Calu3 (cell line): ENCODE measurements at regions of chr15 and their contacts with region 1.

Region 1: DNA sequence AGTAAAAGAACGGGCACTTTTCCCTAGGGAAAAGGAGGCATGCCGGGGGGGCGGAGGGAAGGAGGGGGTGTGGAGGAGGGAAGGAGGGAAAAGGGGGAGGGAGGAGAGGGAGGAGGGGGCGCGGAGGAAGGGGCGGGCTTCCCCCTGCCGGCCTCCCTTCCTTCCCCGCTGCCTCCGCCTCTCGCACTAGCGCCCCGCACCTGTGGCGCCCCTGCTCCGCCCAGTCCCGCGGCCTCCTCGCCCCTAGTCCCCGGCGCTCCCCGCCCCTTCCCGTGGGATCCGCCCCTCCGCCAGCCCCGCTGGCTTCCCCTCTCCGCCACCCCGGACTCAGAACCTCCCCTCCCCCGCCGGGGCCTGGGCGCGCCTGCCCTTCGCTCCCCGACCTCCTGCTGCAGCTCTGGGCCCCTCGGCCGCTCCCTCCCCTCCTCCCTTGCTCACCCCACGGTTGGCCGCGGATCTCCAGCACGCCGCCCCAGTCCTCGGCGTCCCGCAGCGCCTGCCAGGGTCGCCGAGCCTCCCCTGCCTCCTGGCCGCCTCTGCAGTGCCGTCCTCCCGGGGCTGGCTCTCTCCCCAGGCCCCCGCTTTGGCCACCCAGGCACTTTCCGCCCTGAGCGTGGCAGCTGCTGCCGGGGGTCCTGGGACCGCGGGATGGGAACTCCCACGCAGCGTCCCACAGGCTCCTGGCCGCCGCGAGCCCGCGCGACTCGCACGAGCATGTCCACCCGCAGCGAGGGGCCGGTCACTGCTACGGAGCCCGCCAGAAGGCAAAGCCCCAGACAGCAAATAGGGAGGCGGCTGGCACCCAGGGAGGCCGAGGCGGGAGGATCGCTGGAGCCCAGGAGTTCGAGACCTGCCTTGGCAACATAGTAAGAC is 147.4 kb downstream of the TJP1 start:
- DNase-seq: peak; percentile 76
- H3K4me3 Mint-ChIP-seq: peak overlapping the region; percentile 66
- H3K27ac Mint-ChIP-seq: no peak overlapping the region
- H3K4me1 Mint-ChIP-seq: peaks cover 9% of the 10 kb centered on the region
- H3K27me3 Mint-ChIP-seq: no peaks in the 10 kb centered on the region
- CTCF ChIP-seq: no peak

Region 2: DNA sequence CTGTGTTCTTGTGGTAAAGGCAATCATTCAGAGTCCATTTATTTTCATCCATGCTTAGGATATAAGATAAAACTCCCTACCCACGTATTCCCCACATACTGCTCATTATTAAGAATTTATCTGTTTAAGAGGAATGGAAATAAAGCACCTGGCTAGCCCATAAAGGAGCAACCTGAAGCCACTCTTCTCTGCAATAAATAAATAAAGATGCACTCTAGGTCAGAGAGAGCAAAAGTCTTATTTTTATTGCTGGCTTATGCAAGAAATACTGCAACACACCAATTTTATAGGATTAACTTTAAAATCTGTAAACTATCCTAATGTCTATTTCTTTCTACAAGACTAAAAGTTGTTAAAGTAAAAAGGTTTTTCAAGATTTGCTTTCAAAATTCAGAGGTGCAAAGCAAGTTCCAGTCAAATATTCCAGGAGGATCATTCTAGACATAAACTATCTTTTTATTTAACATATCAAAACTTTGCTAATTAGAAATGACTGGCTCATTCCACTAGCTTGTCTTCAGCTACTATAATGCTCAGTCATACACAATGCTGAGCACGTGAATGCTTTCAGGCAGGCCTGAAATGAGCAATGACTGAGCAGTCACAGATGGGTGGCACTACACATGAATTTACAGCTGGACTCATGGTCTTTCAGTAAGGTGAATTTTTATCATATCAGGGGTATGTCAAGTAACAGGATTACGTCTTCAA is 140.3 kb after region 1 on chr15:
- CTCF ChIA-PET with region 1: no interaction called
- intact Hi-C with region 1: loop called (anchors 10 kb)
- DNase-seq: no peak
- H3K4me3 Mint-ChIP-seq: peak overlapping the region; percentile 28
- H3K27ac Mint-ChIP-seq: no peak overlapping the region
- H3K4me1 Mint-ChIP-seq: peaks cover 9% of the 10 kb centered on the region
- H3K27me3 Mint-ChIP-seq: no peaks in the 10 kb centered on the region
- CTCF ChIP-seq: no peak